SK-MEL-5 (cell line): ENCODE measurements at regions of chr17 and their contacts with region 1.

Region 1: GRCh38 chr17:82051776-82052637 is at the starts of genes GPS1 and RFNG:
- DNase-seq: peak; percentile 74
- total RNA-seq, gene GPS1: 284 and 295 TPM in 2 replicates
- total RNA-seq, gene RFNG: 29.2 and 29.3 TPM in 2 replicates

Region 2: DNA sequence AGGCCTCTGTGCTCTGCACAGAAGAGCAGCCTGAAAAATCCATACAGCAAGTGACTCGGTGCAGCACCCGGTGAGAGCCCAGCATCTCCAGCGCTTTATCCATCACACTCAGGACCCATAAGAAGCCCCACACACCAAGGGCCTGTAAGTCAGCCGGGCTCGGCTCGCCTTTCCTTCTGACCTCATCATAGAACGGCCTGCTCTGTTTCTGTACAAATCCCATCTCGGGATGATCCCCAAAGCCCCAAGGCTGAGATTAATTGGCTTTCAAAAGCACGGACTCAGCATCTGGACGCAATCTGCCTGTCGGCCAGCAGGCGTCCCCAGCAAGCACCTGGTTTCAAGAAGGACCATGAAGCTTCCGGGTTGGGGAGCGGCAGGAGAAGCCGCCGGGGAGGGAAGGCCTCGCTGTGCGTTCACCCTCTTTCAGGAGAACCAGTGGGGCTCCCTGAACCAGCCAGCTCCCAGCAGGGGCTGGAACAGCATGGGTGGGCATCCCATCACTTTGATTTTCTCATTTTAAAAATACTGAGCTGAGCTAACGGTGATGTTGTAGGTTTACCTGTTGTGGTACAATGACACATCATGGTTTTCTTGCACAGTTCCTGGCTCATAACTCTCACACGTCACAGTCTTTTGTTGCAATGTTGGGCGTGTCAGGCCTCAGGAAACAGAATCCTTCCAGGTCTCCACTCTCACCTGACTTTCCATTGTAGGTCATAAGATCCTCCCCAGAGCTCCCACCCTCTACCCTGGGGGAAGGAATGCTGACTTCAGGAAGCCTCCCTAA is 153.9 kb after region 1 on chr17:
- in situ Hi-C with region 1: loop called (anchors 10 kb)
- DNase-seq: peak; percentile 97